Astrocyte of the cerebellum (primary cell): ENCODE measurements at regions of chr3 and their contacts with region 1.

Region 1: DNA sequence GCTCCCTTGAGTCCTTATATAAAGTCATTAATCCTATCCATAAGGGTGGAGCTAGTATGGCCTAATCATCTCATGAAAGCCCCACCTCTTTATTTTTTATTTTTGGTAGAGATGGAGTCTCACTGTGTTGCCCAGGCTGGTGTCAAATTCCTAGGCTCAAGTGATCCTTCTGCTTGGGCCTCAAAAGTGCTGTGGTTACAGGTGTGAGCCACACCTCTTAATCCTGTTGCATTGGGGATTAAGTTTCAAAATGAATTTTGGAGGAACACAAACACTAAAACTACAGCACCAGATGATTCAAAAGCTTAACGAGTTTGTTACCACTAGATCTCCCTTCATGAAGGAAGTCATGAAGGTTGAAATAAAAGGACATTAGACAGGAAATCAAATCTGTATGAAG is 27.7 kb downstream of the RAB7A start:
- DNase-seq: no peak
- H3K4me3 ChIP-seq: no peak overlapping the region
- CTCF ChIP-seq: no peak

Region 2: DNA sequence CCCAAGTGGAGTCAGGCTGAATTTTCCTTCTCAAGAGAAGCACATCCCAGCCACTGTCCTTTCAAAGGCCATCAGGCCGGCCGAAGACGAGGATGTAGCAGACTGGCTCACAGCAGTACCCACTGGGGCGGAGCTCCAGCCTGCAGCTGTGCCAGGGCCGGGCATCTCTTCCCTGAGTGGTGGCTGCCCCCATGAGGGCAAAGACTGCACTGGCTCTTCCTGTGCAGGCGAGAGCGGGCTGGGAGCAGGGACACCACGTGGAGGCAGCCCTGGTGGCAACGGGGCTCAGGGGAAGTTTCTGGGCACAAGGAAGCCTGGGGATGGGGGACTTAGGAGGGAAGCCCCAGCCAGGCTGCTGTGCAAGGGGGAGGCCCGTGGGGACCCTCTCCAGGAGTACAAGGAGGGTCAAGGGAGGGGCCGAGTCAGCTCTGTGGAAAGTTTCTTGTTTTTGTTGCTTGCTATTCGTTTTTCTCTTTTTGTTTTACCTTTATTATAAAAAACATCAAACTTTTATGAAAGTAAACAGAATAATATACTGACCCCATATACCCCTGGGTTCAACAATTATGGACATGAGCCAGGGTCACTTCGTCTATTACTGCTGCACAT is 169.2 kb before region 1 on chr3:
- in situ Hi-C with region 1: no loop called
- DNase-seq: no peak
- H3K4me3 ChIP-seq: no peak overlapping the region
- CTCF ChIP-seq: peak; percentile 71

Region 3: GRCh38 chr3:128794770-128795649 is 41.3 kb after region 1 on chr3:
- in situ Hi-C with region 1: loop called (anchors 5 kb)
- DNase-seq: no peak
- H3K4me3 ChIP-seq: no peak overlapping the region
- CTCF ChIP-seq: peak; percentile 82

Region 4: GRCh38 chr3:128805772-128806171 is 52.1 kb after region 1 on chr3:
- in situ Hi-C with region 1: no loop called
- DNase-seq: no peak
- H3K4me3 ChIP-seq: no peak overlapping the region
- CTCF ChIP-seq: no peak